ENCODE measurements at regions of chr6 and their contacts with region 1.

Region 1: GRCh38 chr6:188821-189655 is 103.2 kb upstream of the DUSP22 start:
- H3K4me3 ChIP-seq: no peak overlapping the region
- H3K27ac ChIP-seq: no peak overlapping the region
- H3K4me1 ChIP-seq: no peaks in the 10 kb centered on the region
- CTCF ChIP-seq: peak; percentile 94

Region 2: GRCh38 chr6:203661-204060 is 14.6 kb after region 1 on chr6:
- CTCF ChIA-PET with region 1: interaction called, 12 read pairs
- POLR2A ChIA-PET with region 1: no interaction called
- H3K4me3 ChIP-seq: no peak overlapping the region
- H3K27ac ChIP-seq: no peak overlapping the region
- H3K4me1 ChIP-seq: no peaks in the 10 kb centered on the region
- CTCF ChIP-seq: no peak

Region 3: GRCh38 chr6:408599-409102 is 219.6 kb after region 1 on chr6:
- CTCF ChIA-PET with region 1: interaction called, 106 read pairs
- POLR2A ChIA-PET with region 1: no interaction called
- H3K4me3 ChIP-seq: no peak overlapping the region
- H3K27ac ChIP-seq: no peak overlapping the region
- H3K4me1 ChIP-seq: peaks cover 6% of the 10 kb centered on the region
- CTCF ChIP-seq: no peak

Region 4: GRCh38 chr6:551405-551804 is 362.4 kb after region 1 on chr6:
- CTCF ChIA-PET with region 1: interaction called, 14 read pairs
- POLR2A ChIA-PET with region 1: no interaction called
- H3K4me3 ChIP-seq: no peak overlapping the region
- H3K27ac ChIP-seq: no peak overlapping the region
- H3K4me1 ChIP-seq: 0 out of 2 replicates have a peak, but pooled peaks cover 3% of the 10 kb centered on the region
- CTCF ChIP-seq: peak; percentile 72; the same call in 1 of the 2 replicates

Region 5: DNA sequence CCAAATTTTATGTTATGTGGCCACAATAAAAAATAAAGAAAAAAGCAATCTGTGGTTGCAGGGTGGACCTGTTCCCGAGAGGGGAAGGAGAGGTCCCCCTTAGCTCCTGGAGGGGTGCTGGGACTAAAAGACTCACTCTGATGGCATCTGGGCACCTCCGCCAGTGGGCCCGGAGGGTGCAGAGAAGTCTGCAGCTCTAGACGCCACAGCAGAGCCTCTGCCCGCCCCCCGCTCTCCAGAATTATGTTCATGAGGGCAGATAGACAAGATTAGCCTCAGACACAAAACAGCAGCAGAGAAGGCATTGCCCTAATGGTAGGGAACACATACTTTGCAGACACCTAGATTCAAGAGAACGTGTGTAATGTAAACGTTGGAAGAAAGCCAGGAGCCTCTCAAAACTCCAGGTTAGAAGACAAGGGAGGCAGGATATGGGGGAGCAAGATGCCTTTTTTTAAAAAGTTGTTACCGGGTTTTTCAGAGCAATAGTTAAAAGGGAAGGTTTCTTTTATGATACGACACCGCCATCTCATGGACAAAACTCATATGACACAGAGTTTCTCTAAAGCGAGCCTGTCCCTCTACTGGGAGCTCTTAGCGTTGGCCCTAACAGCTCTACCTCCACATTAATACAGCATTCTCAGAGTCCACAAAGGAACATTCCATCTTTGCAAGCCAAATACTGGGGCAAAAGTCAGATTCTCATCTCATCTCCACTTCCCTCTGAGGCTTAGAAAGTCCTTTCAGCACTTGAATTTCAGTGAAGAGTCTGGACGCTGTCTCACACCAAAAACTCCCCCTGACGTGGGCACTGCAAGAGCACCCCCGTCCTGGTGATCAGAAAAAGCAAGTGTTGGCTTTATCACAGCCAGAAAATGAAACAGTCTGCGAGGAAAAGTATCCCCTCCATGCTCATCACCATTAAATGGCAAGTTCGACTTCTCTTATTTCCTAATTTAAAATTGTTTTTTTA is 1247.6 kb after region 1 on chr6:
- CTCF ChIA-PET with region 1: interaction called, 11 read pairs
- POLR2A ChIA-PET with region 1: no interaction called
- H3K4me3 ChIP-seq: no peak overlapping the region
- H3K27ac ChIP-seq: no peak overlapping the region
- H3K4me1 ChIP-seq: peaks cover 4% of the 10 kb centered on the region
- CTCF ChIP-seq: peak; percentile 82